ENCODE measurements at regions of chr9 and their contacts with region 1.

Region 1: GRCh38 chr9:92140074-92140753 is 25.0 kb upstream of the SPTLC1 start:
- DNase-seq: peak; percentile 52
- H3K4me3 ChIP-seq: no peak overlapping the region
- H3K27ac ChIP-seq: no peak overlapping the region
- H3K4me1 ChIP-seq: peaks cover 12% of the 10 kb centered on the region
- H3K27me3 ChIP-seq: no peaks in the 10 kb centered on the region
- CTCF ChIP-seq: peak; percentile 81 to 93

Region 2: DNA sequence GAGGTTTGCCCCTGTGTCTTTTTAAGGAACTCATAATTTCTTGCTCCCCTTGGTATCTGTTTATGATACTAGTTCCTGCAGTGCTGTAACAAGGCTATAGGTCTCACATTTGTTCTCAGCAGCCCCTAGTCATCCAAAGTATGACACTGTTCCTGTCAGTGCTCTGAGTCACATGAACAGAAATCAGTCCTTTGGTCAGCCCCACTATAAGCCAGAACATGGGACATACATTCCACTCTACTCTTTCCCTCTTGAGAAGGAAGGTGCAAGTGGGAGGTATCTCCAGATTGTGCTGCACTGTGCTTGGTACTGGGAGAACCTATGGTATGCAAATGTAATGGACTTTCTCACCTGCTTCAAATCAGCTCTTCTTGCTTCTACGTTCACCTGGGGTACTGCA is 66.3 kb after region 1 on chr9:
- CTCF ChIA-PET with region 1: no interaction called
- dilution Hi-C with region 1: no loop called
- in situ Hi-C with region 1: no loop called
- intact Hi-C with region 1: loop called (anchors 2 kb)
- DNase-seq: no peak
- H3K4me3 ChIP-seq: no peak overlapping the region
- H3K27ac ChIP-seq: no peak overlapping the region
- H3K4me1 ChIP-seq: no peaks in the 10 kb centered on the region
- H3K27me3 ChIP-seq: no peaks in the 10 kb centered on the region
- CTCF ChIP-seq: no peak

Region 3: GRCh38 chr9:92242260-92243136 is 102.3 kb after region 1 on chr9:
- CTCF ChIA-PET with region 1: interaction called, 3 read pairs
- dilution Hi-C with region 1: no loop called
- in situ Hi-C with region 1: loop called (anchors 10 to 25 kb)
- intact Hi-C with region 1: loop called (anchors 1 kb)
- DNase-seq: peak; percentile 63
- H3K4me3 ChIP-seq: no peak overlapping the region
- H3K27ac ChIP-seq: no peak overlapping the region
- H3K4me1 ChIP-seq: peaks cover 14% of the 10 kb centered on the region
- H3K27me3 ChIP-seq: no peaks in the 10 kb centered on the region
- CTCF ChIP-seq: peak; percentile 2 to 35

Region 4: GRCh38 chr9:92293452-92294296 is 153.5 kb after region 1 on chr9 and contains the start of gene IARS1:
- CTCF ChIA-PET with region 1: no interaction called
- dilution Hi-C with region 1: no loop called
- in situ Hi-C with region 1: no loop called
- intact Hi-C with region 1: loop called (anchors 1 kb)
- DNase-seq: peak; percentile 98
- H3K4me3 ChIP-seq: peak within 1 kb of the TSS; percentile 75 to 100 (median 99)
- H3K27ac ChIP-seq: peak within 1 kb of the TSS; percentile 95
- H3K4me1 ChIP-seq: peaks cover 35% of the 10 kb centered on the region
- H3K27me3 ChIP-seq: no peaks in the 10 kb centered on the region
- CTCF ChIP-seq: peak; percentile 5 to 38
- total RNA-seq, gene IARS1: 240 to 401 TPM

Region 5: DNA sequence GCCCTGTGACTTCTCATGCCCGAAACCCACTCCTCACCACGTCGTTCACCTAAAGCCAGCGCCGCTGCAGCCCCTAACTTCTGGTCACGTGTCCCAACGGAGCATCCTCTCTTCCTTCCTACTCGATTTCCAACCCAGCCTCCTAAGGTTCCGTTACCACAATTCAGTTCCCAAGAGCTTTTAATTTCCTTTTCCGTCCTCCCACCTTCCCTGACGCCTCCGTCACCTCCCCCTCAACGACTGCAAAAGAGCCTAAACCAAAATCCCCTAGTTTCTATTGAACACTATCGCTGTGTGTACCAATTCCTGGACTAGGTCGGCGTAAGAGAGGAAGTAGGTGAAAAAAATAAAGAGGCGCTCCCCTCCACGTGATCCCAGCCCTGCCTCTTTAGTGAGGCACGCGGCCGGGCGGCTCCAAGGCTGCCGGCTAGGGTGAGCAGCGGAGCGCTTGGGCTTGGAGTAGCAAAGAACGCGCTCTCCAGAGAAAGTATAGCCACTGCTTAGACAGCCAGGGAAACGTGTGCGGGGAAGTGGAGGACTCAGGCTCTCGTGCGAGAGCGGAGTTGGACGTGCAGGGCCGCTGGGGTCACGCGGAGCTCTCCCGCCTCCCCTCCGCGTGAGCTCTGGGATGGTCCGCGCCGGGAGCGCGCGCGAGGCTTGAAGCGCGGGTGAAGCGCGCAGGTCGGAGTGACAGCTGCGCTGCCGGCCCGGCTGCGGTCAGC is 185.2 kb after region 1 on chr9 and contains the starts of genes CENPP and NOL8:
- CTCF ChIA-PET with region 1: no interaction called
- dilution Hi-C with region 1: no loop called
- in situ Hi-C with region 1: no loop called
- intact Hi-C with region 1: loop called (anchors 2 kb)
- DNase-seq: peak; percentile 91
- H3K4me3 ChIP-seq: peak within 1 kb of the TSS; percentile 80 to 99 (median 93)
- H3K27ac ChIP-seq: peak within 1 kb of the TSS; percentile 98
- H3K4me1 ChIP-seq: peaks cover 27% of the 10 kb centered on the region
- H3K27me3 ChIP-seq: no peaks in the 10 kb centered on the region
- CTCF ChIP-seq: no peak
- total RNA-seq, gene CENPP: 3.0 to 7.5 TPM
- total RNA-seq, gene NOL8: 21.8 to 42.4 TPM

Region 6: GRCh38 chr9:92634712-92635605 is 494.7 kb after region 1 on chr9:
- CTCF ChIA-PET with region 1: no interaction called
- dilution Hi-C with region 1: no loop called
- in situ Hi-C with region 1: loop called (anchors 10 to 25 kb)
- intact Hi-C with region 1: loop called (anchors 5 kb)
- DNase-seq: peak; percentile 44
- H3K4me3 ChIP-seq: no peak overlapping the region
- H3K27ac ChIP-seq: no peak overlapping the region
- H3K4me1 ChIP-seq: no peaks in the 10 kb centered on the region
- H3K27me3 ChIP-seq: no peaks in the 10 kb centered on the region
- CTCF ChIP-seq: peak; percentile 94 to 98